ENCODE measurements at regions of chr2 and their contacts with region 1.

Region 1: GRCh38 chr2:160324161-160324800 is 124.2 kb upstream of the ITGB6 start:
- DNase-seq: peak; percentile 77
- ATAC-seq: peak; percentile 67; the same call in 1 of the 2 replicates
- H3K4me3 ChIP-seq: no peak overlapping the region
- H3K27ac ChIP-seq: no peak overlapping the region
- H3K4me1 ChIP-seq: peaks cover 6% of the 10 kb centered on the region; the same call in 1 of the 2 replicates
- H3K27me3 ChIP-seq: no peaks in the 10 kb centered on the region
- CTCF ChIP-seq: peak; percentile 89

Region 2: DNA sequence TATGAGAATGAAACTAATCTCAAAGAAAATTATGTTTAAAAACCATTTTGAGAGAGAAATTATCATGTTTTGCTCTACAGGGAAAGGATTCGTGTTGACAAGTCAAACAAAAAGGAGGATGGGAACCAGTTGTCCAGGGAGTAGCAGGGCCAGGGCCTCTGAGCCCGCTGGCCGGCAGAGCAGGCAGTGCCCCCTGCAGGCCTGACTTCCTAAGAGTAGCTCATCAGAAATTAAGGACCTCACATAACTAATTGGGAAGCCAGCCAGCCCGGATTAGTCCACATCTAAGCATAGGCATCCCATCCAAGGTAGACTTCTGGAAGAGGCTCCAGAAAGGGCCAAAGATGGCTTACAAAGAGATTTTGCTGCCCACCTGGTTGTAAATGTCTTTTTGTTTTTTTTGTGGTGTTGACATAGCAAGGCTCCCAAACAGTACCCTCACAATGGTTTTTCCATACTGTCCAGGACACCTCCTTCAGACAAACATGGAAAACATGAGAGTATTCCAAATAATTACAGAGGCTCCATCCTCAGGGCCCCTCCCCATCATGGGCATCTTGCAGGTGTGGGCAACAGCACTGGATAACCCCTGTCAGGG is 594.7 kb after region 1 on chr2:
- CTCF ChIA-PET with region 1: no interaction called
- POLR2A ChIA-PET with region 1: no interaction called
- intact Hi-C with region 1: loop called (anchors 1 kb)
- DNase-seq: peak; percentile 71
- ATAC-seq: peak; percentile 88
- H3K4me3 ChIP-seq: no peak overlapping the region
- H3K27ac ChIP-seq: no peak overlapping the region
- H3K4me1 ChIP-seq: peaks cover 7% of the 10 kb centered on the region; the same call in 1 of the 2 replicates
- H3K27me3 ChIP-seq: no peaks in the 10 kb centered on the region
- CTCF ChIP-seq: peak; percentile 88

Region 3: DNA sequence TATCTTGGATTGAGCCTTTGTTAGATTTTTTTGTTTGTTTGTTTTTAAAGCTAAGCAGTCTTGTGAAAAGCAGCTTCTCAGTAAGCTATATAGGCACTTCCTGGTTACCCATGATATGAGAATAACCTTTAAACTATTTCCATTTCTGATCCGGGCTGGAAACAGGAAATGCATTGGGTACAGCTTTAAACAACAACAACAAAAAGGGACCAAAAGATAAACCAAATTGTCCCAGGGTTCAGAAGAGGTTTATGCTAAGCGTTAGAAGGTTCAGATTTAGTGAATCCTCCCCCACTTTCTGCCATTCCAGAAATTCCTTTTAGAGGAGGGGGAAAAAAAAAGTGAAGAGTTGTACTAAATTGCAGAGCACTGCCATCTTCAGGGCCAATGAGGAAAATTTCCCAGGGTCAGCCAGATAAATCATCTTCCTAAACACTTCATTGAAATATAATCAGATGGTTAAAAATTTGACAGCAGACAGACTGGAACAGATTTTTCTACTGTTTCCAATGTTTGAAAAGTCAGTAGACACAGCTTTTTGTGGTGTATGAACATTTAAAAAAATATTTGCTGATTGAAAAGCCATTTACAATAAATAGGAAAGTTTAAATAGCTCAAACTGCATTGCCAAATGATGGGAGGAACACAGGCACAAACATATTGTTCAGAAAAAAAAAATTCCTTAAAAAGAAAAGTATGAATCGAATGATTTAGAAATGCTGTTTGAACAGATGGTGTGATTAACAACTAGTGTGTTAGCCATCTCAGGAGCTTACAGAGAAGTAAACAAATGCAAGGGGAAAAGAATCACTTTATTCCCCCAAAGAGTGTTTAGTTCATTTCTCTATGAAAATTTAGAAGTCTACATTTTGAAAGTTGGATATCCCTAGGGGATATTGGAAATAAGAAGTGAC is 646.0 kb after region 1 on chr2:
- CTCF ChIA-PET with region 1: interaction called, 13 read pairs
- POLR2A ChIA-PET with region 1: no interaction called
- intact Hi-C with region 1: loop called (anchors 1 kb)
- DNase-seq: peak; percentile 87
- ATAC-seq: peak; percentile 70
- H3K4me3 ChIP-seq: peak overlapping the region; percentile 26; the same call in 1 of the 2 replicates
- H3K27ac ChIP-seq: peak overlapping the region; percentile 65
- H3K4me1 ChIP-seq: peaks cover 11% of the 10 kb centered on the region
- H3K27me3 ChIP-seq: no peaks in the 10 kb centered on the region
- CTCF ChIP-seq: peak; percentile 94

Region 4: DNA sequence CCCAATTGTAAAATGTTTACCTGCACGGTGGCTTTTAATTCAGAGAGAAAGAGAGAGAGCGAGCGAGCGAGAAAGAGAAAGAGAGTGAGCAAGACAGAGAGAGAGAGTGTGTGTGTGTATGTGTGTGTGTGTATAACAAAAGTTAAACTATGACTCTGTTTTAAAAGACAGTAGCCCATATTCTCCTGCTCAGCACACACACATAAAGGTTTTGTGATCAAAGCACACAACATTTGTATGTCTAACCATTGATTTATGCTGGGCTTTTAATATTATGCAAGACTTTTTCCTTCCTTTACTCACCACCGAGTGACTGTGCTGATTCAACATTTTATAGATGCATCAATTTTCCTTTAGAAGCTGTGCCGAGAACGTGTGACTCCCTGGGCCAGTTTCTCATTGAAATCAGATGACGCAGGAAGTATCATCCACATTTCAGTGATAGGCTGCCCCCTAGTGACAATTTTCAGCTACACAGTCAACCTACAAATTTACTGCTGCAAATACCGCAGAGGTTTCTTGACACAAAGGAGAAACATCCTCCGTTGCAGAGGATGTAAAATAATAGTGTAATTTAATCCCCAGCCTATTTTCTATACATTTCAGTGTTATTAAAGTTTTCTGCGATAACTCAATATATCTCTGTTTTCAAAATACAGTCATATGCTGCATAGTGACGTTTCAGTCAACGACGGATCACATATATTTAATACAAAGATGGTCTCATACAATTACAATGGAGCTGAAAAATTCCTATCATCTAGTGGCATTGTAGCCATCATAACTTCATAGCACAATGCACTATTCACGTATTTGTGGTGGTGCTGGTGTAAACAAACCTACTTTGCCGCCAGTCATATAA is 670.1 kb after region 1 on chr2:
- CTCF ChIA-PET with region 1: interaction called, 4 read pairs
- POLR2A ChIA-PET with region 1: interaction called, 8 read pairs
- intact Hi-C with region 1: loop called (anchors 2 kb)
- DNase-seq: peak; percentile 92
- ATAC-seq: peak; percentile 89
- H3K4me3 ChIP-seq: no peak overlapping the region
- H3K27ac ChIP-seq: no peak overlapping the region
- H3K4me1 ChIP-seq: peaks cover 7% of the 10 kb centered on the region
- H3K27me3 ChIP-seq: no peaks in the 10 kb centered on the region
- CTCF ChIP-seq: peak; percentile 94

Measured in PC-3 (cell line).